ENCODE measurements at regions of chr21 and their contacts with region 1.

Region 1: DNA sequence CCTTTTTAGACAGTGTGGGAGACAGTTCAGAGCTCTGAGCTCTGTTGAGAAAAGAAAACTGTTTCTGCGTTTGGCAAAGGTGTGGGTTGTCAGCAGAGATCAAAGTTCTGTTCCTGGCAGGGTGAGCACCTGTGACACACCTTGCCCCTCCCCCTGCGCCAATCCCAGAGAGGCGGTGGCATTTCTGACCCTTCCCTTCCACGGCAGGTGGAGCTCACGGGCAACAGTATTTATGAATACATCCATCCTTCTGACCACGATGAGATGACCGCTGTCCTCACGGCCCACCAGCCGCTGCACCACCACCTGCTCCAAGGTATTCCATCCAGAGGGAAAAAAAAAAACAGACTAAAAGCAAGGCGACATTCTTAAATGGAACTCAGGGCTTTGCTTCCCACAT is 20.7 kb downstream of the SIM2 start:
- DNase-seq: peak in 5 of 10 donors; percentile 8 to 35 (median 11)
- H3K4me3 ChIP-seq: no peak overlapping the region
- H3K27ac ChIP-seq: peak overlapping the region in 18 of 59 donors; percentile 1 to 75 (median 40)
- H3K27me3 ChIP-seq: peaks cover 0 to 44% (median 10%) of the 10 kb centered on the region in 45 donors
- CTCF ChIP-seq: no peak

Region 2: DNA sequence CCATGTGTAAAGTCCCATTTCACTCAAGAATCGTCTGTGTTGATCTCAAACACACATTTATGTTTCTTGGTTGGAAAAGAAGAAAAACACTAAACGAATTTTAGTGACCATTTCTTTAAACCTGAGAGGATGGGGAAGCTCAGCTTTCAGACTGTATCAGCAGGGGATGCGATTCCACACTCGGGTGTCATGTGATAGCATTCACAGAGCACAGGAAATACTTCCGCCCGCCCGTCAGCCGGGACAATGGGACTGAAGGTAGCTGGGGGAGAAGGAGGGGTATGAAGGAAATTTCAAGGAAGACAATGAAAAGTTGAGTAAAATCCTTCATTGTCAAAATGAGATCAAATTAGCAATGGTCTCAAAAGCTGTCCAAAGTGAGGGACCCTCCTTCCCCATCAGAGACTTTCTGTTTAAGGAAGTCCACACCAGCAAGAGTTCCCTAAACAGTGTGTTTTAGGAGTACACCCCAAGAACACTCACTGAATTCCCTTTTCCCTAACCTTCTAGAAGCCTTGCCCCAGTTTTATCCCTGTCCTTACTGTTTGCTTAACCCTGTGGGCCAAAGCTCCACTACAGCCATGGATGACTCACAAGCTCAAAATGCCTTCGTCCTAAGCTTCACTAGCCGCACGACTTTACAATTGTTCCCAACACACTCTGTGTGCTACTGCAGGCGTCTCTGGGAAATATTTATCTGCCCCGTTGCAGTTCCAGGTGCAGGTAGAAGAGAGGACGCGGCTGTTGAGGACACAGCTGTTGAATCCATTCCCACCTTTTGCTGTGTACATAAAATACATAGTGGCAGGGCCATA is 72.1 kb before region 1 on chr21:
- intact Hi-C with region 1: loop called in 1 of 2 experiments (anchors 5 kb)
- DNase-seq: no peak
- H3K4me3 ChIP-seq: no peak overlapping the region
- H3K27ac ChIP-seq: no peak overlapping the region
- H3K27me3 ChIP-seq: peaks cover 0 to 7% (median 0%) of the 10 kb centered on the region in 45 donors
- CTCF ChIP-seq: no peak

Measured in dorsolateral prefrontal cortex (tissue), 120 donors.